Endothelial cell of umbilical vein (primary cell): ENCODE measurements at regions of chr3 and their contacts with region 1.

Region 1: DNA sequence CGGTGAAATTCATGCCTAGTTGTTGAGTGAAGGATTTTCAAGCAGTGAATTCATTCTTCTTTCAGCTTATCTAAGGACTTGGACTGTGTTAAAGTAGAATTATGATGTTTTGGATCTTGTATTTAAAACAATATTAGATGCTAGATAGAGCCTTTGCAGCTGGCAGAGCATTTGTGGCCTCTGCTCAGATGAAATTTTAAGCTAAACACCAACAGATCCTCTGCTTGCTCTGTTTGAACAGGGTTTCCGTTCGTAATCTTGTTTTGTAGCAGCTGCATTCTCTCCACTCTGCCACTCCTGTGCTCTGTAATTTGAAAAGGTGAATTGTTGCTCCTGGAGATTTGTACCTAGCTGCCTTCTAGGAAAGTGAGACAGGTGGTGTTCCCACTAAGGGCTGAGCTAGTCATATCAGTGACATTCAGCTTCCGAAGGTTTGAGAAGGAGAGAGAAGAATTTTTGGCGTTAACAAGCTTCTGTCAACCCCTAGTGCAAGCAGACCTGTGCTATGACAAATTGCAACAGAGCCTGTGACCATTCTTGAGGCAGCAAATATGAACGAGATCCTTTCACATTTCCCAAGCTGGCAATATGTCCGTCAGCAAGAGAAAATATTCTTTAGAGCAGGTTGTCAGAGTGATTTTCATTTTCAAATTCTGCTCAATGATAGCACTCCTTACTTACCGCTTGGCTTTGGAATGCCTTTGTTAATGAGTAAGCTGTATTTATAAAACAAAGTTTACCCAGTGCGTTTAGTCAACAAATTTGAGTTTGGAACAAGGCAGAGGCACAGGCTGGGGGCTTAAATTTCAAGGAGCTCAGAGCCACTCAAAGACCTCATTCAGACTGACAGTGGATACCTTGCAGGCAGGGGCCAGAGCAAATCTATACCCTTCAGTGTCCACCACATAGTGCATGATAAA is 5.3 kb downstream of the CHST2 start:
- DNase-seq: no peak
- H3K4me3 ChIP-seq: no peak overlapping the region
- H3K27ac ChIP-seq: no peak overlapping the region
- H3K4me1 ChIP-seq: no peaks in the 10 kb centered on the region
- H3K27me3 ChIP-seq: no peaks in the 10 kb centered on the region
- CTCF ChIP-seq: no peak
- POLR2A ChIP-seq: no peak

Region 2: DNA sequence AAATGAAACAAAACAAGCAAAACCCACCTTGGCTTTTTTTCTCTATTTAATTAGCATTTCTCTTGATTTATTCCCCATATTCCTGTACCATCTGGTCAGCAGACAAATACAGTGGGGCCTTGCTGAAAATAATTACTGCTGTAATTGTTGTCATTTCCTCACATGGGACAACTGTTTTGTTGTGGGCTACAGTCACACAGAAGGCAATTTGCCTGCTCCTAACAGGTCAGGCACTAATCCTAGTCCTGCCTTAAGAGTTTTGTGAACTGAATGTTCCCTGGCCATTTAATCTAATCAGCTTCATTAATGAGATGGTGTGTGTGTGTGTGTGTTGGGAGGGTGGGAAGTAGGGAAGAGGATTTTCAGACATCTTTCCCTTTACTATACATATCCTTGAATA is 389.4 kb before region 1 on chr3:
- CTCF ChIA-PET with region 1: no interaction called
- POLR2A ChIA-PET with region 1: no interaction called
- dilution Hi-C with region 1: no loop called
- intact Hi-C with region 1: no loop called
- DNase-seq: no peak
- H3K4me3 ChIP-seq: no peak overlapping the region
- H3K27ac ChIP-seq: no peak overlapping the region
- H3K4me1 ChIP-seq: no peaks in the 10 kb centered on the region
- H3K27me3 ChIP-seq: no peaks in the 10 kb centered on the region
- CTCF ChIP-seq: no peak
- POLR2A ChIP-seq: no peak

Region 3: DNA sequence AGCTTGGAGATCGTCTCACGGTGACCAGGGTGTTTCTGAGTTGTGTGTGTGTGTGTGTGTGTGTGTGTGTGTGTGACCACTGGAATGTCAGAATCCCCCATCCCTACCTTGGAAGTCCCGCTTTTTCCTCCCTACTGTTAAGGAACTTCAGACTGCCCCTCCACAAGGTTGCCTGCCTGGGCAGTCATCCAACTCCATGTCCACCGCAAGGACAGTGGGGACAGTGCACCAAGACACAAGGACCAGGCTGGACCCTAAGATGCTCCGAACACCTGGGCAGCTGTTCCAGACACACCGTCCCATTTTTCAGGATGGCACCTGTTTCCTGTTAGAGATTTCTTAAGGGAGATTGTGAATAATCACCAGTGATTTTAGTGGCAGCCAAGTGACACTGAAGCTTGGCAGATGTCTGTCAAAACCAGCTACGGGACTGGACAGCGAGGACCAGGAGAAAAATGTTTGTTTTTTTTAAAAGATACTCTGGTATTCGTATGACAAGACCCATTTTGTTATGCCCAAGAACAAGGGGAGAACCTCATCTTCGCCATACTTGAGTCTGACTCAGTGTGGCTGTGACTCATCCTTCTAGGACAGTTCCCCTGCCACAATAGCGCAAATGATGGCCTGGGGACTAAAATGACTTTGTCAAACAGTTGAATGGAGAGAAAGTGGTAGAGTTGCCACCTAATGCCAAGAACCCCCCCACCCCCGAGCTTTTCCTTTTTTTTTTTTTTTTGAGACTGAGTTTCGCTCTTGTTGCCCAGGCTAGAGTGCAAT is 176.9 kb before region 1 on chr3:
- CTCF ChIA-PET with region 1: no interaction called
- POLR2A ChIA-PET with region 1: no interaction called
- dilution Hi-C with region 1: no loop called
- intact Hi-C with region 1: no loop called
- DNase-seq: no peak
- H3K4me3 ChIP-seq: no peak overlapping the region
- H3K27ac ChIP-seq: no peak overlapping the region
- H3K4me1 ChIP-seq: no peaks in the 10 kb centered on the region
- H3K27me3 ChIP-seq: peaks cover 41 to 75% of the 10 kb centered on the region in 2 experiments
- CTCF ChIP-seq: no peak
- POLR2A ChIP-seq: no peak

Region 4: GRCh38 chr3:143135150-143135549 is 10.3 kb after region 1 on chr3:
- CTCF ChIA-PET with region 1: interaction called, 14 read pairs
- POLR2A ChIA-PET with region 1: no interaction called
- dilution Hi-C with region 1: no loop called
- intact Hi-C with region 1: loop called (anchors 2 kb)
- DNase-seq: peak; percentile 81
- H3K4me3 ChIP-seq: no peak overlapping the region
- H3K27ac ChIP-seq: peak overlapping the region; percentile 19
- H3K4me1 ChIP-seq: peaks cover 26% of the 10 kb centered on the region
- H3K27me3 ChIP-seq: no peaks in the 10 kb centered on the region
- CTCF ChIP-seq: no peak
- POLR2A ChIP-seq: peak; percentile 56